Tibial artery (tissue), 4 donors: ENCODE measurements at regions of chr13 and their contacts with region 1.

Region 1: GRCh38 chr13:76414320-76414719 is 471.9 kb downstream of the KCTD12 start:
- DNase-seq: no peak
- H3K4me3 ChIP-seq: no peak overlapping the region
- H3K27ac ChIP-seq: no peak overlapping the region
- H3K4me1 ChIP-seq: no peaks in the 10 kb centered on the region
- H3K27me3 ChIP-seq: no peaks in the 10 kb centered on the region
- CTCF ChIP-seq: no peak

Region 2: DNA sequence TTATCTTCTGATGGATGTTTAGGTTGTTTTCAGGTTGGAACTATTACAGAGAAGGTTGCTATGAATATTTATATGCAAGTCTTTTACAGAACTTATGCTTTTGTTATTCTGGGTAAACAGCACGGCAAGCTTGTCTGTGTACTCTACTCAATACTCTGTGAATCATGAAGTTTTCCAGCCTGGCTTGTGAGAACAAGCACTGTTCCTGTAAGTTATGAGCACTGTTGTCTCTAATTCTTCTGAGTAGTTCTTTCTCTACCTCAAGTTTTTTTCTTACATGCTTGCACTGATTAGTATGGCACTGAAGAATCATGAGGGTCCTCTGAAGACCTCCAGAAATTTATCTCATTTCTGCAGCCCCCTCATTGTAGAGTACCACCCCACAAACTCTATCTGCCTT is 25.0 kb before region 1 on chr13:
- intact Hi-C with region 1: loop called (anchors 1 kb)
- DNase-seq: no peak
- H3K4me3 ChIP-seq: no peak overlapping the region
- H3K27ac ChIP-seq: no peak overlapping the region
- H3K4me1 ChIP-seq: no peaks in the 10 kb centered on the region
- H3K27me3 ChIP-seq: no peaks in the 10 kb centered on the region
- CTCF ChIP-seq: no peak